ENCODE measurements at regions of chr1 and their contacts with region 1.

Region 1: GRCh38 chr1:93205892-93206566 is 25.5 kb downstream of the CCDC18 start:
- DNase-seq: no peak
- ATAC-seq: no peak

Region 2: DNA sequence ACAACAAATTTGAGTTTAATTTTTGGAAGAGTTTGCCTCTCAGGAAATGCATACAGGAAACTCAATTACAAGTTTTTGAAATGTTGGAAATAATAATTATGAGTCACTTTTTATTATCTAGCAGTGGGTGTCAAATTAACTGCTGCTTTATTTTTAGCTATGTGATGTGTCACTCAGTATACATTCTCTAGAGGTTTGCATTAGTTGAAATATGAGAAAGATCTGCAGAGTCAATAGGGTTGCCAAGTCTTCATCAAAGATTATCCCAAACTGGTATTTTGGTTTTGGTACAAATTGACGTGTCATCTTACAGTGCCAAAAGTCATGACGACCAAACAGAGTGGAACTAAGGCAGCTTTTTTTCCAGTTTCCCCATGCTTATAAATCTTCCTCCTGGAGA is 190.4 kb before region 1 on chr1:
- intact Hi-C with region 1: no loop called
- DNase-seq: no peak
- ATAC-seq: no peak

Region 3: DNA sequence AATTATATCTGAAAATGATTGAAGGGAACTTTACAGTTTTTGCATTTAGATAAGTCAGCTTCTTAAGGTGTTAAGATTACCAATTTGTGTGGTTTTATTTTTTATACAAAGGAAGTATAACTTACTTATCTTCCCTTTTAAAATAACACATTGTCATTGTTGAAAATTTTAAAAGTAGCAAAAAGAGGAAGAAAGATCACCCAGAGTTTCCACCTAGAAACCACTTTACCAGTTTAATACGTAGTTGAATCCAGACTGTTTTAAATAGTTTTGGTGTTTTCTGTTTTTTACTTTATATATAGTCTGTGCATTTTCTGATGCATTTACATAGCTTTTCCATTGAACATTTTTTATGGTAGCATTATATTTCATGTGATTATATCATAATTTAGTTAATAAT is 19.4 kb before region 1 on chr1:
- intact Hi-C with region 1: loop called (anchors 2 kb)
- DNase-seq: no peak
- ATAC-seq: no peak